ENCODE measurements at regions of chr4 and their contacts with region 1.

Region 1: GRCh38 chr4:109977854-109978501 is 65.3 kb downstream of the EGF start:
- DNase-seq: no peak
- ATAC-seq: no peak
- H3K4me3 Mint-ChIP-seq: no peak overlapping the region
- H3K27ac Mint-ChIP-seq: no peak overlapping the region
- H3K4me1 Mint-ChIP-seq: no peaks in the 10 kb centered on the region
- H3K27me3 Mint-ChIP-seq: peaks cover 12% of the 10 kb centered on the region

Region 2: GRCh38 chr4:109721033-109721432 is 256.9 kb before region 1 on chr4:
- CTCF ChIA-PET with region 1: no interaction called
- POLR2A ChIA-PET with region 1: no interaction called
- intact Hi-C with region 1: no loop called
- DNase-seq: no peak
- ATAC-seq: no peak
- H3K4me3 Mint-ChIP-seq: no peak overlapping the region
- H3K27ac Mint-ChIP-seq: no peak overlapping the region
- H3K4me1 Mint-ChIP-seq: peaks cover 2% of the 10 kb centered on the region
- H3K27me3 Mint-ChIP-seq: no peaks in the 10 kb centered on the region

Region 3: DNA sequence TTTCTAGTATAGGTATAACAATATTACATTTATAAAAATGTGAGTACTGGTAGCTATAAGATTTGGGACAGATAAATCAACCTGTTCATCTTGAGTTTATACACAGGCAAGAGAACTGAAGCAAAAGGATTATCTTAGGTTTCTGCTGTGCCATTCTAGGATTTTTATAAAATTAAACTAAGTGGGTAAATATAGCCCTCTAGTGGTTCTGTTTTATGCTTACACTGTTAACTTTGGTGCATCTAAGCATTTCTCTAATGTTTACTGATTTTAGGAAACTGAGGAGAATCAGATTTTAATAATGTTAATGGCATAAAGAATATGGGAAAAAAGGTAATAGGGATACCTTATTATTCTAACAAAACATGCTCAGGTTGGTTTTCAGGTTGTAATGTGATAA is 151.3 kb before region 1 on chr4:
- CTCF ChIA-PET with region 1: interaction called, 6 read pairs
- POLR2A ChIA-PET with region 1: no interaction called
- intact Hi-C with region 1: loop called in 1 of 2 experiments (anchors 5 kb)
- DNase-seq: no peak
- ATAC-seq: no peak
- H3K4me3 Mint-ChIP-seq: no peak overlapping the region
- H3K27ac Mint-ChIP-seq: no peak overlapping the region
- H3K4me1 Mint-ChIP-seq: peaks cover 8% of the 10 kb centered on the region
- H3K27me3 Mint-ChIP-seq: no peaks in the 10 kb centered on the region

Region 4: DNA sequence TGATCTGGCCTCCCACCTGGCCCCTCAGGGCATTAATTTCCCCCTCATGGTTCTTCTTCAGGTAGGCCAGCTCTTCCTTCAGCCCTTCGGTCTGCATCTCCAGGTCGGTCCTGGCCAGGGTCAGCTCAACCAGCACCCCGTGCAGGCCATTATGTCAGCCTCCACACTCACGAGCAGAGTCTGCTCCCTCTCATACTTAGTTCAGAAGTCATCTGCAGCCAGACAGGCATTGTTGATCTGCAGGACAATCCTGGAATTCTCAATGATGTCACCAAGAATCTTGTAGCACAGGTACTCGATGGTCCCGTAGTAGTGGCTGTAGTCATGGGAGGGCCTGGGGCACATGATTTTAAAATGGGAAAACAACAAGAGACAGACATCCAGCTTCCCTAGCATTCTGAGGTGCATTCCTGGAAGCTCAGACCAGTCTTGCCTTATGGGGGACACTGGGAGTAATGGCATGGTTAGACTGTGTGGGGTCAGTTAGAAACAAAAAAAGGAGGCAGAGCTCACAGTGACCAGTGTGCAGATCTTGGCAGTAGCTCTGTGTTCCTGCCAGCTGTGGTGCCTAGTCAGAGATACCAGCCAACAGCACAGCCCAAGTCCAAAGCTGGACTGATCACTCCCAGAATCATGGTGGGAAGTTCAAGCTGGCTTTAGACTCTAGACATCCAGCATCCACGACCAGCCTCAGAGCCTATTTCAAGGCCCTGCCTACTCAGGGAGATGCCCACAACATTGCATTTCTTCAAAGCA is 98.2 kb before region 1 on chr4:
- CTCF ChIA-PET with region 1: interaction called, 3 read pairs
- POLR2A ChIA-PET with region 1: no interaction called
- intact Hi-C with region 1: loop called in 1 of 2 experiments (anchors 5 kb)
- DNase-seq: no peak
- ATAC-seq: no peak
- H3K4me3 Mint-ChIP-seq: no peak overlapping the region
- H3K27ac Mint-ChIP-seq: no peak overlapping the region
- H3K4me1 Mint-ChIP-seq: no peaks in the 10 kb centered on the region
- H3K27me3 Mint-ChIP-seq: peaks cover 4% of the 10 kb centered on the region